Sciatic nerve (tissue), 2 donors: ENCODE measurements at regions of chr4 and their contacts with region 1.

Region 1: GRCh38 chr4:134216436-134216835 is 14.8 kb upstream of the PABPC4L start:
- DNase-seq: no peak
- ATAC-seq: no peak

Region 2: DNA sequence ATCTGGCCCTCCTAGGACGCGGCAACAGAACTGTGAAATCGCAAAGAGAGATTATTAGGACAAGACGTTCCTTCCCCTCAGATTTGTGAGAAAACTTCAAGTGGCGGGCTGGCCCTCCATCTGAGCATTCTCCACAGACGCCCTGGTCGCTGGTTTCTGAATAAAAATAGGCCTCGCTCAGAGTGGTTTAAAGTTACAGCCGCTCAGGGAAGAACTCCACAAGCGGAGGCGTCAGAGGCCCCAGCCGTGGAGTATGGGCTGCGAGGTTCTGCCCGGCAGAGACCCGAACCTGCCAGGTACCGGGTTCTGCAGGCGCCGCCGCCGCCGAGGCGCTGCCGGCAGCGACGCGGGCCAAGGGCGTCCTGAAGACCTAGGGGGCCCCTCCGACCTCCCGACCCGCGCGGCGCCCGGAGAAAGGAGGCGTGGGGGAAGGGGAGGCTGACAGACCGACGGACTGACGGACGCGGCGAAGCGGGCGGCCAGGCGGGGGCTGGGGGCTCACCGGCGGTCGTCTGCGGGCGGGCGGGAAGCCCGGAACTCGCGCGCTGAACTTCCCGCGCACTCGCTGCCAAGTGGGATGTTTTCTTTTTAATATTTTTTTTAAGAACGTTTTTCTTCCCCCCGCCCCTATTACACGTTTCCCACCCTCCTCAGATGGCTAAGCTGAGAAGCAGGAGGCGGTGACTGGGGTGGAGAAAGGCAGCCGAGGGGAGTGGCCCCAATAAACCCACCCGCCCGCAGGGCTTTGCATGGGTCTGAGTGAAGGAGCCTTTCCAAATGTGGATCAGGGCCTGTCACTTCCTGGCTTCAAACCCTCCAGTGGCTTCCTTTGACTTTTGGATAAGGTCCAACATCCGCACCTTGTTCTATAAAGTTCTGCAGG is 15.0 kb before region 1 on chr4 and contains the start of gene PABPC4L:
- intact Hi-C with region 1: loop called (anchors 1 kb)
- DNase-seq: peak; percentile 55
- ATAC-seq: peak; percentile 87
- total RNA-seq, gene PABPC4L: 1.9 TPM